ENCODE measurements at regions of chr18 and their contacts with region 1.

Region 1: GRCh38 chr18:56458770-56459712 is 179.4 kb downstream of the TXNL1 start:
- DNase-seq: peak; percentile 95
- H3K4me3 ChIP-seq: no peak overlapping the region
- H3K27ac ChIP-seq: peak overlapping the region; percentile 65
- H3K4me1 ChIP-seq: peaks cover 28% of the 10 kb centered on the region
- H3K27me3 ChIP-seq: no peaks in the 10 kb centered on the region
- CTCF ChIP-seq: no peak
- POLR2A ChIP-seq: no peak

Region 2: GRCh38 chr18:55328301-55328700 is 1130.7 kb before region 1 on chr18:
- CTCF ChIA-PET with region 1: no interaction called
- POLR2A ChIA-PET with region 1: no interaction called
- dilution Hi-C with region 1: no loop called
- intact Hi-C with region 1: loop called (anchors 1 kb)
- DNase-seq: peak; percentile 96
- H3K4me3 ChIP-seq: peak overlapping the region in 1 of 3 experiments; percentile 19
- H3K27ac ChIP-seq: peak overlapping the region; percentile 92
- H3K4me1 ChIP-seq: peaks cover 69% of the 10 kb centered on the region
- H3K27me3 ChIP-seq: no peaks in the 10 kb centered on the region
- CTCF ChIP-seq: no peak
- POLR2A ChIP-seq: peak; percentile 36

Region 3: GRCh38 chr18:55415258-55415871 is 1043.7 kb before region 1 on chr18:
- CTCF ChIA-PET with region 1: no interaction called
- POLR2A ChIA-PET with region 1: no interaction called
- dilution Hi-C with region 1: no loop called
- intact Hi-C with region 1: loop called (anchors 5 kb)
- DNase-seq: peak; percentile 90
- H3K4me3 ChIP-seq: no peak overlapping the region
- H3K27ac ChIP-seq: peak overlapping the region; percentile 13
- H3K4me1 ChIP-seq: peaks cover 45% of the 10 kb centered on the region
- H3K27me3 ChIP-seq: no peaks in the 10 kb centered on the region
- CTCF ChIP-seq: peak; percentile 79 to 91
- POLR2A ChIP-seq: no peak

Region 4: GRCh38 chr18:56021136-56021808 is 437.8 kb before region 1 on chr18:
- CTCF ChIA-PET with region 1: no interaction called
- POLR2A ChIA-PET with region 1: no interaction called
- dilution Hi-C with region 1: no loop called
- intact Hi-C with region 1: loop called (anchors 1 kb)
- DNase-seq: peak; percentile 86
- H3K4me3 ChIP-seq: peak overlapping the region in 1 of 3 experiments; percentile 3
- H3K27ac ChIP-seq: peak overlapping the region; percentile 93
- H3K4me1 ChIP-seq: peaks cover 35% of the 10 kb centered on the region
- H3K27me3 ChIP-seq: no peaks in the 10 kb centered on the region
- CTCF ChIP-seq: no peak
- POLR2A ChIP-seq: no peak

Region 5: GRCh38 chr18:56291294-56291693 is 167.7 kb before region 1 on chr18:
- CTCF ChIA-PET with region 1: no interaction called
- POLR2A ChIA-PET with region 1: no interaction called
- dilution Hi-C with region 1: no loop called
- intact Hi-C with region 1: loop called (anchors 1 kb)
- DNase-seq: peak; percentile 83
- H3K4me3 ChIP-seq: no peak overlapping the region
- H3K27ac ChIP-seq: peak overlapping the region; percentile 46
- H3K4me1 ChIP-seq: peaks cover 24% of the 10 kb centered on the region
- H3K27me3 ChIP-seq: no peaks in the 10 kb centered on the region
- CTCF ChIP-seq: no peak
- POLR2A ChIP-seq: no peak

Region 6: DNA sequence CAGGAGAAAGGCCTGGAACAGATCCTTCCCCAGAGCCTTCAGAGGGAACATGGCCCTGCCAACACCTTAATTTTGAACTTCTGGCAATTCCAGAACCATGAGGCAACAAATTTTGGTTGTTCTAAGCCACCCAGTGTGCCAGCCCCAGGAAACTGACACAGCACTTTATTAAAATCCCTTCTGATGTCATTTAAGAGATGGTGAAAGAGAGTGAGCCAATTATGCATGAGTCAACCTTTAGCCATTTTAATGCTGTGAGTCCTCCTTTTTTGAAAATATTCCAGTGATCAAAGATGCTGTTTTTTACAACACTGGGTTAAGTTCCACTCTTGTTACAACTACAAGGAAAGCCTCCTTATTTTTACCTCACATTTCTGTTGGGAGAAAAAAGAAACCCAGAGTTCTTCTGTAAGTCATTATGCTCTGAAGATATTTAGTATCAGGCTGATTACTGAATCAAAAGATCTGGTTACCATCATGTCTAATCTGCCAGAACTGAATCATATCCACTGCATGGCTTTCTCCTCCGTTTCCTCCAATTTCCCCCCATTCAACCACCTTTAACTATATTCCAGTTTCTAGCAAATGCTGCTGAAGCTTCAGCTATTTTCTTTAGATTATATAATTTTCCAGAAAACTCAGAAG is 56.0 kb before region 1 on chr18:
- CTCF ChIA-PET with region 1: no interaction called
- POLR2A ChIA-PET with region 1: no interaction called
- dilution Hi-C with region 1: no loop called
- intact Hi-C with region 1: no loop called
- DNase-seq: peak; percentile 45
- H3K4me3 ChIP-seq: no peak overlapping the region
- H3K27ac ChIP-seq: peak overlapping the region; percentile 67
- H3K4me1 ChIP-seq: peaks cover 8% of the 10 kb centered on the region
- H3K27me3 ChIP-seq: no peaks in the 10 kb centered on the region
- CTCF ChIP-seq: no peak
- POLR2A ChIP-seq: no peak

Region 7: DNA sequence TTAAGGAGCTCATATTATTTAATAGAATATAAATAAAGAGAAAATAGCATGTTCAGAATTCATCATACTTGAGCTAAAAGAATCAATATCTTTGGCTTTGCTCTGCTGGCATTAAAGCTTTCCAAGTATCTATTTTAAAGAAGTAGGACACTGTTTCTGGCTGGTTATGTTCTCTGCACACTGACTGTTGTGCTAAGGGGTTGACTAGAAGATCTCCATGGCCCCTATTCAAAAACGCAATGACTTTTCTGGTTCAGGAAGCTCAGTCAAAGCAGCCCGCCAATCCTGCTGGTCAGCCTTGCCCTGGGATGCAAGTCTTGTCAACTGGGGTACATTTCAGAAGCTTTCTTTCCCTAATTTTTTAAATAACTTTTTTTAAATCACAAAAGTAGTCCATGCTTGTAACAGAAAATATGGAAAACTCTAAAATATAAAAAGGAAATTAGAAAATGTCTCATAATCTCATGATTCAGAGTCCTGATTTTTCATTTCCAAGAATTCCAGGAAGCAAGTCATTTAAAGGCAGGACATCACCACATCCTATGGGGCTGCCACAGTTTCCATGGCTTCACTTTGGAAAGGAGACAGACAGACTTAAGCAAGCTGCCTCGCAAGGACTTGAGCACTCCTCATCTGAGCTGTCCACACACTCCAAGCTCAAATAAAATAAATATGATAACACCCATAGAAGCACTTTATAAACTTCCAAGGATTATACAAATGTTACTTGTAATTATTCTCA is 15.7 kb before region 1 on chr18:
- CTCF ChIA-PET with region 1: interaction called, 5 read pairs
- POLR2A ChIA-PET with region 1: no interaction called
- dilution Hi-C with region 1: no loop called
- intact Hi-C with region 1: loop called (anchors 1 kb)
- DNase-seq: peak; percentile 72
- H3K4me3 ChIP-seq: no peak overlapping the region
- H3K27ac ChIP-seq: peak overlapping the region; percentile 15
- H3K4me1 ChIP-seq: peaks cover 9% of the 10 kb centered on the region
- H3K27me3 ChIP-seq: no peaks in the 10 kb centered on the region
- CTCF ChIP-seq: no peak
- POLR2A ChIP-seq: no peak